ENCODE measurements at regions of chr11 and their contacts with region 1.

Region 1: GRCh38 chr11:47186076-47186936 is at the start of gene PACSIN3:
- DNase-seq: no peak
- H3K4me3 ChIP-seq: peak within 1 kb of the TSS; percentile 61 to 95 (median 86)
- H3K27ac ChIP-seq: peak within 1 kb of the TSS; percentile 89 to 91
- H3K4me1 ChIP-seq: peaks cover 4 to 10% of the 10 kb centered on the region in 2 donors
- H3K27me3 ChIP-seq: no peaks in the 10 kb centered on the region
- CTCF ChIP-seq: no peak
- POLR2A ChIP-seq: no peak
- total RNA-seq, gene PACSIN3: 9.9 to 47.3 (median 33.1) TPM

Region 2: GRCh38 chr11:46639197-46639839 is 547.0 kb before region 1 on chr11:
- intact Hi-C with region 1: no loop called
- DNase-seq: no peak
- H3K4me3 ChIP-seq: no peak overlapping the region
- H3K27ac ChIP-seq: no peak overlapping the region
- H3K4me1 ChIP-seq: no peaks in the 10 kb centered on the region
- H3K27me3 ChIP-seq: no peaks in the 10 kb centered on the region
- CTCF ChIP-seq: no peak
- POLR2A ChIP-seq: no peak

Region 3: GRCh38 chr11:47216121-47216798 is 30.0 kb after region 1 on chr11:
- intact Hi-C with region 1: loop called (anchors 2 kb)
- DNase-seq: no peak
- H3K4me3 ChIP-seq: peak overlapping the region; percentile 53 to 76 (median 70)
- H3K27ac ChIP-seq: peak overlapping the region; percentile 93
- H3K4me1 ChIP-seq: peaks cover 0 to 10% of the 10 kb centered on the region in 2 donors
- H3K27me3 ChIP-seq: no peaks in the 10 kb centered on the region
- CTCF ChIP-seq: no peak
- POLR2A ChIP-seq: no peak

Region 4: GRCh38 chr11:47259178-47259977 is 73.1 kb after region 1 on chr11:
- intact Hi-C with region 1: loop called (anchors 10 kb)
- DNase-seq: no peak
- H3K4me3 ChIP-seq: peak overlapping the region in 2 of 3 donors; percentile 41 to 63
- H3K27ac ChIP-seq: peak overlapping the region in 1 of 2 donors; percentile 96
- H3K4me1 ChIP-seq: peaks cover 0 to 4% of the 10 kb centered on the region in 2 donors
- H3K27me3 ChIP-seq: no peaks in the 10 kb centered on the region
- CTCF ChIP-seq: peak; percentile 21 to 40 (median 39)
- POLR2A ChIP-seq: no peak

Region 5: GRCh38 chr11:47355283-47356128 is 169.2 kb after region 1 on chr11:
- intact Hi-C with region 1: loop called (anchors 10 kb)
- DNase-seq: peak; percentile 91 to 98
- H3K4me3 ChIP-seq: peak overlapping the region; percentile 45 to 81 (median 58)
- H3K27ac ChIP-seq: peak overlapping the region; percentile 85
- H3K4me1 ChIP-seq: peaks cover 0 to 4% of the 10 kb centered on the region in 2 donors
- H3K27me3 ChIP-seq: no peaks in the 10 kb centered on the region
- CTCF ChIP-seq: peak; percentile 64 to 98 (median 94)
- POLR2A ChIP-seq: no peak

Region 6: GRCh38 chr11:48384670-48385069 is 1198.4 kb after region 1 on chr11:
- intact Hi-C with region 1: no loop called
- DNase-seq: no peak
- H3K4me3 ChIP-seq: no peak overlapping the region
- H3K27ac ChIP-seq: no peak overlapping the region
- H3K4me1 ChIP-seq: no peaks in the 10 kb centered on the region
- H3K27me3 ChIP-seq: no peaks in the 10 kb centered on the region
- CTCF ChIP-seq: no peak
- POLR2A ChIP-seq: no peak

Measured in breast epithelium (tissue), 4 donors.